ENCODE measurements at regions of chr11 and their contacts with region 1.

Region 1: DNA sequence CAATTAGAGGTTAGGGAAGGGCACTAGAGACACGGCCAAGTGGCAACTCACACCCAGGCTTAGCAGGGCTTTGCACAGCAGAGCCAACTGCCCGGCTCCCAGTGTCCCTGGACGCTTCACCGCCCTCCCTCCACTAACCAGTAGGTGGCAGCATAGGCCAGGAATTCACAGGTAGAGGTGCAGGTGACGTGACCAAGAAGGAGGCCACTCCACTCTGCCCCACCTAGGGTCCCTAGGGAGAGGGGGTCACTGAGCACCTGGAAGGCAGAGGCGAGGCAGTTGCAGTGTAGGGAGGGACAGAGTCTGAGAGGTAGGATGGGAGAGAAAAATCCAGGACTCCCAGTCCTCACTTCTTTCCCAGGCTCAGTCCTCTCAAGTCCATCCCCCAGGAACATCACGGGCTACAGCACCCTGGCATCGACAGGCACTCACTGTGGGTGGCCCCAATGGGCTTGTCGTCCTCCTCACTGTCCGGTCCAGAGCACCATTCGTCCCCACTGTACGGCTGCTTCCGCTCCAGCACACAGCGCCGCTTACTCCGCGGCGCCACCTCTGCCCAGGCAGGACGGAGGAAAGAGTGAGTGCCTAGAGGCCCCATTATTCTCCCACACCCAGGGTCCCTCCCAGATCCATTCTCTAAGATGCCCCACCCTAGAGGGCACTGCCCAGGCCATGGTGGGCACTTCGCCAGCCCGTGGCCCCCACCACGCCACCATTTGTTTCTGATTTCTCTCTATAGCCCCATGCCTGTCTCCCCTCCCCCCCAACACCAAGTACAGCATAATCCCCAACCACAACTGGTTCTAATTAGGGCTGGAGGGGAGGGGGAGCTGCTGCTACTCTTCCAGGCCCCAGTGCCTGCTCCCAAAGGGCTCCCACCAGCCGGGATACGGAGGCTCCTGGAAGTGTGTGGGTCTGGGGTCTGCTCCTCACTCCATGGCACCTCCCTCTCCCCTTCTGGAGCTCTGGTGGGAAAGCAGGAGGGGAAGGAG is 18.4 kb downstream of the BCL9L start:
- DNase-seq: peak; percentile 79 to 98 (median 92)

Region 2: GRCh38 chr11:118928108-118928870 is 20.9 kb after region 1 on chr11:
- intact Hi-C with region 1: loop called (anchors 1 kb)
- DNase-seq: peak; percentile 82 to 98 (median 92)

Region 3: DNA sequence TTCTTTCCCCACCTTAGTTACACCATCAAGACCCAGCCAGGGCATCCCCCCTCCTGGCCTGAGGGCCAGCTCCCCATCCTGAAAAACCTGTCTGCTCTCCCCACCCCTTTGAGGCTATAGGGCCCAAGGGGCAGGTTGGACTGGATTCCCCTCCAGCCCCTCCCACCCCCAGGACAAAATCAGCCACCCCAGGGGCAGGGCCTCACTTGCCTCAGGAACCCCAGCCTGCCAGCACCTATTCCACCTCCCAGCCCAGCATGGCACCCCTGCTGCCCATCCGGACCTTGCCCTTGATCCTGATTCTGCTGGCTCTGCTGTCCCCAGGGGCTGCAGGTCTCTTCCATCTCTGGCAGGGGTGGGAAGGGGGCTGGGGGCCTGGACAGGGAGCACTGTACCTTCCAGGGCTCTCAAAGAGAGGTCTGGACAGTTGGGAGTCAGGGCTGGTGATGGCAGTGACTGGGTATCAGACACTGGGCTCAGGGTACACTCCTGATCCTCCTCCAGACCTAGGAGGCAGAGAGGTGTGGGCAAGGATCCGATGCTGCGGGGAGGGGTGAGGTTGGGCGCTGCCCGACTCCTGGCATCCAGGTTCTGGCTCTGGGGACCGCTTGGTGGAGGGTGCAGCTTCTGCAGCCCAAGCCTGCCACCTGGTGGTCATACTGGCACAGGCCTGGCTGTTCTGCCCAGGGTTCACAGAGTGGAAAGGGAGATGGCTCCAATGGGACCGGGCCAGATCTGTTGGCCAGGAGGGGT is 48.9 kb after region 1 on chr11 and contains the start of gene UPK2:
- intact Hi-C with region 1: loop called (anchors 1 kb)
- DNase-seq: peak; percentile 80 to 98 (median 92)

Region 4: DNA sequence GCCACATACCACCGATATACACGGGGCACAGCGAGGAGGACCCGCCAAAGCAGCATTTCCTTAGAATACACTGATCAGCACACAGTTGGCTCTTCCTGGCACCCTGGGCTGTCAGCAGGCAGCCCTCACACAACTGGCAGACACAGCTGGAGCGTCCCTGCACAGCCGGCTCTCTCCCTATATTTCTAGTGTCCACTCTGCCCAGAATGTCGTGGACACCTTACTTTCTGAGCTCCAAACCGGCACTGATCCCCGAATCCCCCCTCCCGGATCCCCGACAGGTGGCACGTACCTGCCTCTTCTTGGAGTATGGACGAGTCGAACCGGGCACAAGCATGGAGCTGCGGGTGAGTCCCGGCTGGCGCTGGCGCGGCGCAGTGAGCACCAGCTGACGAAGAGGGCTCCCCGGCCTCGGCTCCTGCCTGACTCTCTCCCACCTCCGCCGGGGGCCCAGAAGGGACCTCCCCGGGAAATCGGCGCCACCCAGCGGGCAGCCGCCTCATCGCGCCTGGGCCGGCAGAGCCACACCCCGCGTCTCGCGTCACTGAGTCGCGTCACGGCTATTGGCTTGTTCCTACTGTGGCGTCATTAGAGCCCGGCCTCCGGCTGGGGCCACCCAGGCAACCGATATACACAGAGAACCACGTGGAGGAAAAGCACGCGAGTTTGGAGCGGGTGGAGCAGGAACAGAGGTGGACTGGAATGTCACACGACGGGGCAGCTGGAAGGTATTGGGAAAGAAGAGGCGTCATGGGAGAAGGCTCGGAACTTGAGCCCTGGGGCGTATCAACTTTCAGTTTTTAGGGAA is 474.0 kb after region 1 on chr11 and contains the start of gene USP2:
- intact Hi-C with region 1: no loop called
- DNase-seq: peak; percentile 95 to 100 (median 99)